Endothelial cell of umbilical vein (primary cell): ENCODE measurements at regions of chr1 and their contacts with region 1.

Region 1: GRCh38 chr1:1273512-1274298 is at the start of gene UBE2J2:
- DNase-seq: peak; percentile 84
- H3K4me3 ChIP-seq: peak within 1 kb of the TSS; percentile 47 to 72 (median 64)
- H3K27ac ChIP-seq: peak within 1 kb of the TSS; percentile 69
- H3K4me1 ChIP-seq: peaks cover 24% of the 10 kb centered on the region
- H3K27me3 ChIP-seq: no peaks in the 10 kb centered on the region
- CTCF ChIP-seq: peak in 1 of 2 donors; percentile 3
- POLR2A ChIP-seq: peak; percentile 84
- total RNA-seq, gene UBE2J2: 80.7 and 87.2 TPM in 2 replicates

Region 2: GRCh38 chr1:1013105-1013921 is 260.4 kb before region 1 on chr1 and contains the start of gene ISG15:
- CTCF ChIA-PET with region 1: no interaction called
- POLR2A ChIA-PET with region 1: no interaction called
- dilution Hi-C with region 1: no loop called
- intact Hi-C with region 1: loop called (anchors 5 kb)
- DNase-seq: peak; percentile 89
- H3K4me3 ChIP-seq: peak within 1 kb of the TSS; percentile 41 to 83 (median 81)
- H3K27ac ChIP-seq: peak within 1 kb of the TSS; percentile 54
- H3K4me1 ChIP-seq: peaks cover 10% of the 10 kb centered on the region
- H3K27me3 ChIP-seq: no peaks in the 10 kb centered on the region
- CTCF ChIP-seq: no peak
- POLR2A ChIP-seq: peak; percentile 61
- total RNA-seq, gene ISG15: 44.6 and 47.6 TPM in 2 replicates

Region 3: GRCh38 chr1:1250786-1251284 is 22.9 kb before region 1 on chr1:
- CTCF ChIA-PET with region 1: no interaction called
- POLR2A ChIA-PET with region 1: no interaction called
- dilution Hi-C with region 1: no loop called
- intact Hi-C with region 1: loop called (anchors 2 kb)
- DNase-seq: no peak
- H3K4me3 ChIP-seq: no peak overlapping the region
- H3K27ac ChIP-seq: peak overlapping the region; percentile 11
- H3K4me1 ChIP-seq: no peaks in the 10 kb centered on the region
- H3K27me3 ChIP-seq: peaks cover 10 to 14% of the 10 kb centered on the region in 2 experiments
- CTCF ChIP-seq: no peak
- POLR2A ChIP-seq: no peak

Region 4: GRCh38 chr1:1291548-1292441 is 18.1 kb after region 1 on chr1:
- CTCF ChIA-PET with region 1: interaction called, 11 read pairs
- POLR2A ChIA-PET with region 1: no interaction called
- dilution Hi-C with region 1: no loop called
- intact Hi-C with region 1: loop called (anchors 1 kb)
- DNase-seq: peak; percentile 50
- H3K4me3 ChIP-seq: no peak overlapping the region
- H3K27ac ChIP-seq: no peak overlapping the region
- H3K4me1 ChIP-seq: no peaks in the 10 kb centered on the region
- H3K27me3 ChIP-seq: no peaks in the 10 kb centered on the region
- CTCF ChIP-seq: peak; percentile 73 to 83
- POLR2A ChIP-seq: no peak

Region 5: DNA sequence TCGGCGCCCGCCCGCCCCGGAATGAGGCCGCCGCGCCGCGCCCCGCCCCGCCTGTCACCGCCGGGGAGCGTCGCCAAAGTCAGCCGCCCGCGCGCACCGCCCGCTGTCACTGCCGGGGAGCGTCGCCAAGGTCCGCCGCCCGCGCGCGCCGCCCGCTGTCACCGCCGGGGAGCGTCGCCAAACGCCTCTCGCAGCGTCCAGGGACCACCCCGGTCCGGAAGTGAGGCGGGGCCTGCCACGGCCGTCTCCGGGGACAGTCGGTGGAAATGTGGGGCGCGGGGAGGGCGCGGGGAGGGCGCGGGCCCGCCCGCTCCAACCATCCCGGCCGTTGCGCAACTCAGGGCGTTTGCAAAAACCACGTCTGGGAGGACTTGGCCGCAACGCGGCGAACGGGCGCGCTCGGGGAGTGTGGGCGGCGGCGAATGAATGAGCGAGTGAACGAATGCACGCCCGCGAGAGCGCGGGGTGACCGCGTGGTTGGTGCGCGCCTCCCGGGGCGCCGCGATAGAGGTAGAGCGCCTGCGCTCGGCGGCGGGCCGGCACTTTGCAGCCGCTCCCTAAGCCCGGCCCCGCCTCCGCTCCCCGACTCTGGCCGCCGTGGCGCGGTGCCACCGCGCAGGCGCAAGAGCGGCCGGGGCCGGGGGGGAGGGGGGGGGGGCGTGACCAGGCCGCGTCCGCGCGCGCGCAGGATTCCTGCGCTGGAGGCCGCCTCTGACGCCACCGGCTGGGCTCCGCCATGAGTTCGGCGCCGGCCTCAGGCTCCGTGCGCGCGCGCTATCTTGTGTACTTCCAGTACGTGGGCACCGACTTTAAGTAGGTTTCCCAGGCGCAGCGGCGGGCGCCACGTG is 34.4 kb after region 1 on chr1 and contains the starts of genes ACAP3 and PUSL1:
- CTCF ChIA-PET with region 1: interaction called, 3 read pairs
- POLR2A ChIA-PET with region 1: interaction called, 4 read pairs
- dilution Hi-C with region 1: no loop called
- intact Hi-C with region 1: loop called (anchors 2 kb)
- DNase-seq: peak; percentile 80
- H3K4me3 ChIP-seq: peak within 1 kb of the TSS; percentile 56 to 94 (median 66)
- H3K27ac ChIP-seq: peak within 1 kb of the TSS; percentile 65
- H3K4me1 ChIP-seq: peaks cover 15% of the 10 kb centered on the region
- H3K27me3 ChIP-seq: no peaks in the 10 kb centered on the region
- CTCF ChIP-seq: no peak
- POLR2A ChIP-seq: peak; percentile 44
- total RNA-seq, gene ACAP3: 39.0 and 43.0 TPM in 2 replicates
- total RNA-seq, gene PUSL1: 16.6 and 18.8 TPM in 2 replicates

Region 6: GRCh38 chr1:1677718-1678580 is 404.2 kb after region 1 on chr1:
- CTCF ChIA-PET with region 1: no interaction called
- POLR2A ChIA-PET with region 1: no interaction called
- dilution Hi-C with region 1: no loop called
- intact Hi-C with region 1: no loop called
- DNase-seq: no peak
- H3K4me3 ChIP-seq: no peak overlapping the region
- H3K27ac ChIP-seq: no peak overlapping the region
- H3K4me1 ChIP-seq: no peaks in the 10 kb centered on the region
- H3K27me3 ChIP-seq: no peaks in the 10 kb centered on the region
- CTCF ChIP-seq: no peak
- POLR2A ChIP-seq: no peak